Naive thymus-derived CD4-positive, alpha-beta T cell (primary cell): ENCODE measurements at regions of chr6 and their contacts with region 1.

Region 1: GRCh38 chr6:153373869-153374268 is 242.8 kb upstream of the RGS17 start:
- DNase-seq: no peak
- ATAC-seq: no peak
- H3K4me3 ChIP-seq: no peak overlapping the region
- H3K4me3 Mint-ChIP-seq: no peak overlapping the region
- H3K27ac ChIP-seq: no peak overlapping the region
- H3K27ac Mint-ChIP-seq: no peak overlapping the region
- H3K4me1 ChIP-seq: no peaks in the 10 kb centered on the region
- H3K4me1 Mint-ChIP-seq: peaks cover 0 to 3% (median 0%) of the 10 kb centered on the region in 7 donors
- H3K27me3 ChIP-seq: no peaks in the 10 kb centered on the region
- H3K27me3 Mint-ChIP-seq: peaks cover 0 to 9% (median 0%) of the 10 kb centered on the region in 5 donors

Region 2: DNA sequence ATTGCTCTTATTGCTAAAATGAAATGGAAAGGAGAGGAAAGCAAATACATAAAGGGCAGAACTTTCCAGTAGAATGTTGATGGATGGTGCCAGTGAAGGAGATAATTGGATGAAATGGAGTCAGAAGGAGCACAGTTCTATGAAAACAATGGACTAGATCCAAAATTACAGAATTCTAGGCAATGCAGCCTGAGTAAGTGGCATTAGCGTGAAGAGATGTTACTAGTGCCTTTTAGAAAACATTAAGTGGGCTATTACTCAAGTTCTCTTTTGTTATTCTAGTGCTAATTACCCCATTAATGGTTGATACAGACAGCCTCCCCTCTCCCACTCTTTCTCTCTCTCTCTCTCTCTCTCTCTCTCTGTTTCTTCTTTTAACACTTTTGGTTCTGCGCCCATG is 33.3 kb before region 1 on chr6:
- CTCF ChIA-PET with region 1: no interaction called
- POLR2A ChIA-PET with region 1: no interaction called
- intact Hi-C with region 1: loop called in 1 of 2 experiments (anchors 1 kb)
- DNase-seq: no peak
- ATAC-seq: no peak
- H3K4me3 ChIP-seq: no peak overlapping the region
- H3K4me3 Mint-ChIP-seq: no peak overlapping the region
- H3K27ac ChIP-seq: no peak overlapping the region
- H3K27ac Mint-ChIP-seq: no peak overlapping the region
- H3K4me1 ChIP-seq: no peaks in the 10 kb centered on the region
- H3K4me1 Mint-ChIP-seq: no peaks in the 10 kb centered on the region
- H3K27me3 ChIP-seq: no peaks in the 10 kb centered on the region
- H3K27me3 Mint-ChIP-seq: no peaks in the 10 kb centered on the region

Region 3: GRCh38 chr6:153424719-153425400 is 51.0 kb after region 1 on chr6:
- CTCF ChIA-PET with region 1: no interaction called
- POLR2A ChIA-PET with region 1: no interaction called
- intact Hi-C with region 1: no loop called
- DNase-seq: no peak
- ATAC-seq: no peak
- H3K4me3 ChIP-seq: no peak overlapping the region
- H3K4me3 Mint-ChIP-seq: no peak overlapping the region
- H3K27ac ChIP-seq: no peak overlapping the region
- H3K27ac Mint-ChIP-seq: no peak overlapping the region
- H3K4me1 ChIP-seq: no peaks in the 10 kb centered on the region
- H3K4me1 Mint-ChIP-seq: no peaks in the 10 kb centered on the region
- H3K27me3 ChIP-seq: no peaks in the 10 kb centered on the region
- H3K27me3 Mint-ChIP-seq: peaks cover 0 to 14% (median 4%) of the 10 kb centered on the region in 5 donors